ENCODE measurements at regions of chr1 and their contacts with region 1.

Region 1: DNA sequence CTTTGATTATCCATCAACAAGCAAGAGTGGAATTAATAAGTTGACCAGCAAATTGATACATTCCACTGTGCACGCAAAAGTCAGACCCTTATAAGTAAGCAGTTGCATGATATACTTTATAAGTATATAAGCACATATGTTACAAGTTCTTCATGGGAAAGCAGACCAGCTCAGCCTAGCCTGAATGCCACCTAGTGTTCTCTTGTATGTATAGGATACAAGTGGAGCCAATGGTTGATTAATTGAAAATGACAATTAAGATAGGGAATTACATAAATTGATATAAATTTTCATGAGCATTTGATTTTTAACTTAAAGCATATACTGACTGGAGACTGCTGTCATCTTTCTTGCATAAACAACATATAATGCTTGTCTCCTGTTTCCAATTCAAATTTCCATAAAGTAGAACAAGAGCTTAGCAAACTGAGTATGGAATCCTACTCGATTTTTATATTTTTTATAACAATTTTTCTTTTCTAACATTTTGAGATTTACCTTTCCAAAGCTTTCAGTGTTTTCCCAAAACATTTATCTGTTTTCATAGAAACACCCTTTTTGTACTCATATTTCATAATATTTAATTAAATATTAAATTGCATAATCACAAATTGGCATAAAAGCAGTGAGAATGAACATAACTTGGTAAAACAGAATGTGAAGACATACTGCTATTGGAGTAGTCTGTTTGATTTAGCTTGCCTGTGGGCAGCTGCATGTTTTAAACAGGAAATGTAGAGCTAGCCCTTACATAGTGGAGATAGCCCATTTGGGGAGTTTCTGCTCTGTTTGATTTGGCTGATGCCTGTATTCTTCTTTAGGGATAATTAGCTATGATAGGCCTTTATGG is 62.8 kb downstream of the MAGI3 start:
- DNase-seq: peak; percentile 12
- ATAC-seq: peak; percentile 65
- H3K4me3 Mint-ChIP-seq: no peak overlapping the region
- H3K27ac Mint-ChIP-seq: no peak overlapping the region
- H3K4me1 Mint-ChIP-seq: peaks cover 4% of the 10 kb centered on the region
- H3K27me3 Mint-ChIP-seq: no peaks in the 10 kb centered on the region
- CTCF ChIP-seq: no peak

Region 2: DNA sequence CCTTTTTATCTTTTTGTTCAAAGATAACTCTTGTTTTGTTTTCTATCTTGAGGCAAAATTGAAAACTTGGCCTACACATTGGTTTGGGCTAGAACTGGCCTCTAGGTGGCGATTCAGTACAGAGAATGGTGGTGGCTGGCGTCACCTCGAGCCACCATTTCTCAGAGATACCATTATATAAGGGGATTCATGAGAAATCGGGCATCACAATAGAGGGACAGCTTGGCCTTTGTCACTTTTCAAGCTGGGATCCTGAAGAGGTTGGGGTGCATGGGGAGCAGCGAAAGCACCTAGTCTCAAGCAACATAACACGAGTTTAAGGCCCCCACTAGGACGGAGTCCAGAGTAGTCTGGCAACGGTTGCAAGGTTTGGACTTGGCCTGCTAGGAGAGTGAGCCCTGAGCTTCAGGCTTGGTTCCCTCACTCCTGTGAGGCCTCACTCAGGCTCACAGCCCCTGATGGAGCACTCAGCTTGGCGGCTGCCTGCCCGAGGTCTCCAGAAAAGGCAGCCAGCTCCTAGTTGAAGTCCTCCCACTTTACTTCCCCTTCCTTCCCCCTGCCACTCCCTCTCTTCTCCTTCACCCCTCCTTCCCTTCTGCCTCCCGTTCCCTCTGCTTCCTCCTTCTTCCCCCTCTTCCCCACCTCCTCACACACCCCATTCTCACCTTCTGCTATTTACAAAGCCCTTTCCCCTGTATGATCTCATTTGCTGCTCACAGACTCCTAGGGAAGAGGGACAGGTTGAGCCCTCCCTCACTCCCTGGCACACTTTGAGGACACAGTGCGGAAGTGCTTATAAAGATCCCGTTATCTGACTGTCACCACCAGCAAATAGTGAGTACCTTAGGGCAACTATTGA is 312.3 kb before region 1 on chr1:
- CTCF ChIA-PET with region 1: interaction called, 10 read pairs
- POLR2A ChIA-PET with region 1: no interaction called
- DNase-seq: peak; percentile 67
- ATAC-seq: peak; percentile 90
- H3K4me3 Mint-ChIP-seq: no peak overlapping the region
- H3K27ac Mint-ChIP-seq: no peak overlapping the region
- H3K4me1 Mint-ChIP-seq: peaks cover 26% of the 10 kb centered on the region
- H3K27me3 Mint-ChIP-seq: no peaks in the 10 kb centered on the region
- CTCF ChIP-seq: peak; percentile 69

Region 3: GRCh38 chr1:113479713-113480676 is 26.8 kb after region 1 on chr1:
- CTCF ChIA-PET with region 1: no interaction called
- POLR2A ChIA-PET with region 1: no interaction called
- DNase-seq: no peak
- ATAC-seq: no peak
- H3K4me3 Mint-ChIP-seq: no peak overlapping the region
- H3K27ac Mint-ChIP-seq: no peak overlapping the region
- H3K4me1 Mint-ChIP-seq: no peaks in the 10 kb centered on the region
- H3K27me3 Mint-ChIP-seq: no peaks in the 10 kb centered on the region
- CTCF ChIP-seq: no peak

Measured in WTC11 (cell line).